Caco-2 (cell line): ENCODE measurements at regions of chr1 and their contacts with region 1.

Region 1: DNA sequence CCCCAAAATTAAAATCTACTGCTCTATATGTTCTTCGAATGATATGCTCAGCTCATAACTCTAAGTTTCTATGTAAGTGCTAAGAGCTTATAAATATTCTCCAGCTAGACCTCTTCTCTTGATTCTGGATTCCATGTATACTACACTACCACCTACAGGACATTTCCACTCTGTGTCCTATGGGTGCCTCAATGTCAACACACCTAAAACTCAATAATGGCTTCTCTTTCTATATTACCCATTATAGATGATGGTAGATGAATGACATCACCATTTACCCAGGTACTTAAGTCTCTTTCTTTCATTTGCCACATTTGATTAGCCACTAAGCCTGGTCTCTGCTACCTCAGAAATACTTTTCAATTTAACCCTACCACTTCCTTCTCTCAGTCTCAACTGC is 41.3 kb downstream of the TBX19 start:
- DNase-seq: peak in 1 of 2 experiments; percentile 31
- H3K4me3 ChIP-seq: no peak overlapping the region
- H3K4me3 Mint-ChIP-seq: no peak overlapping the region
- H3K27ac Mint-ChIP-seq: no peak overlapping the region
- H3K4me1 ChIP-seq: 0 out of 2 replicates have a peak, but pooled peaks cover 4% of the 10 kb centered on the region
- H3K4me1 Mint-ChIP-seq: no peaks in the 10 kb centered on the region
- H3K27me3 ChIP-seq: no peaks in the 10 kb centered on the region
- H3K27me3 Mint-ChIP-seq: no peaks in the 10 kb centered on the region
- CTCF ChIP-seq: peak; percentile 28 to 63

Region 2: GRCh38 chr1:168092566-168093355 is 229.2 kb before region 1 on chr1:
- CTCF ChIA-PET with region 1: interaction called, 4 read pairs
- POLR2A ChIA-PET with region 1: no interaction called
- intact Hi-C with region 1: loop called (anchors 1 kb)
- DNase-seq: peak in 1 of 2 experiments; percentile 50
- H3K4me3 ChIP-seq: no peak overlapping the region
- H3K4me3 Mint-ChIP-seq: no peak overlapping the region
- H3K27ac Mint-ChIP-seq: no peak overlapping the region
- H3K4me1 ChIP-seq: no peaks in the 10 kb centered on the region
- H3K4me1 Mint-ChIP-seq: peaks cover 9% of the 10 kb centered on the region
- H3K27me3 ChIP-seq: no peaks in the 10 kb centered on the region
- H3K27me3 Mint-ChIP-seq: no peaks in the 10 kb centered on the region
- CTCF ChIP-seq: peak; percentile 14 to 63

Region 3: DNA sequence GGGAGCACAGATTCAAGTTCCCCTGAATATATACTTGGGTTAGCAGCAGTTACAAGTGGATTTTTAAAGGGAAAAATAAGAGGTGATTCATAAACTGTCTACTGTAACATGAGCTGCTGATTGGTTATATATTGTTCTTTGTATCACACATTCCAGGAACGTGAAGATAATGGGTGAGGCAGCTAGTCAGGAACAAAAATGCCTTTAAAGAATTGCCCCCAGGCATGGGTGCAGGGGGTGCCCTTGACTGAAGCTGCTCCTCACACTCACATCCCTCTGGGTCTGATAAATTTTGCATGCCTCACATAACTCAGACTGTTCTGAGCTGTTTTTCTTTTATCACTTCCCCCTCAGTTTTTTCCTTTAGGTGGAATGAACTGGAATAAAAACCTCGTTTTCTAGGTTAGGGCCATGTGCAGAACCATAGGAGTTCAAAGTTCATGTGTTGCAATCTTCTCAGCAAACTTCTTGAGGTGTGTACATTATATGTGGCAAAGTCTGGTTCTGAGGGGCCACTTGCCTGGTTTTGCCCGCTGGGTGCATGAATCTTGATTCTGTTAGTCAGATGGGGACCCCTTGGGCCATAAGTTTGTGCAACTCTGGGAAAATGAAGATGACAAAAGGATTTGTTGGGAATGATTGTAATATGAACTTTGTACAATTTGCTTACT is 20.1 kb before region 1 on chr1:
- CTCF ChIA-PET with region 1: interaction called, 11 read pairs
- POLR2A ChIA-PET with region 1: interaction called, 3 read pairs
- intact Hi-C with region 1: no loop called
- DNase-seq: peak; percentile 89 to 92
- H3K4me3 ChIP-seq: no peak overlapping the region
- H3K4me3 Mint-ChIP-seq: peak overlapping the region; percentile 36
- H3K27ac Mint-ChIP-seq: peak overlapping the region; percentile 65
- H3K4me1 ChIP-seq: peaks cover 48% of the 10 kb centered on the region
- H3K4me1 Mint-ChIP-seq: peaks cover 26% of the 10 kb centered on the region
- H3K27me3 ChIP-seq: no peaks in the 10 kb centered on the region; the same call in 1 of the 2 replicates
- H3K27me3 Mint-ChIP-seq: no peaks in the 10 kb centered on the region
- CTCF ChIP-seq: no peak